ENCODE measurements at regions of chr7 and their contacts with region 1.

Region 1: GRCh38 chr7:65373608-65374351 is at the start of gene ZNF92:
- DNase-seq: peak; percentile 90 to 97 (median 95)
- ATAC-seq: peak; percentile 98
- H3K4me3 ChIP-seq: peak within 1 kb of the TSS; percentile 91 to 98
- H3K4me3 Mint-ChIP-seq: peak within 1 kb of the TSS; percentile 94
- H3K27ac ChIP-seq: peak within 1 kb of the TSS; percentile 79 to 90
- H3K27ac Mint-ChIP-seq: peak within 1 kb of the TSS; percentile 93
- H3K4me1 ChIP-seq: peaks cover 24% of the 10 kb centered on the region
- H3K4me1 Mint-ChIP-seq: peaks cover 52% of the 10 kb centered on the region
- H3K27me3 ChIP-seq: no peaks in the 10 kb centered on the region
- H3K27me3 Mint-ChIP-seq: no peaks in the 10 kb centered on the region
- CTCF ChIP-seq: no peak
- total RNA-seq, gene ZNF92: 31.6 to 37.3 TPM

Region 2: GRCh38 chr7:64313740-64314491 is 1059.9 kb before region 1 on chr7 and contains the start of gene ZNF736:
- CTCF ChIA-PET with region 1: no interaction called
- POLR2A ChIA-PET with region 1: interaction called, 4 read pairs
- intact Hi-C with region 1: loop called in 1 of 2 experiments (anchors 5 kb)
- DNase-seq: peak; percentile 71 to 94 (median 86)
- ATAC-seq: peak; percentile 100
- H3K4me3 ChIP-seq: peak within 1 kb of the TSS; percentile 66 to 98
- H3K4me3 Mint-ChIP-seq: peak within 1 kb of the TSS; percentile 99
- H3K27ac ChIP-seq: peak within 1 kb of the TSS; percentile 76 to 88
- H3K27ac Mint-ChIP-seq: peak within 1 kb of the TSS; percentile 98
- H3K4me1 ChIP-seq: peaks cover 25% of the 10 kb centered on the region
- H3K4me1 Mint-ChIP-seq: peaks cover 32% of the 10 kb centered on the region
- H3K27me3 ChIP-seq: no peaks in the 10 kb centered on the region
- H3K27me3 Mint-ChIP-seq: no peaks in the 10 kb centered on the region
- CTCF ChIP-seq: no peak
- total RNA-seq, gene ZNF736: 23.4 to 26.6 TPM

Region 3: DNA sequence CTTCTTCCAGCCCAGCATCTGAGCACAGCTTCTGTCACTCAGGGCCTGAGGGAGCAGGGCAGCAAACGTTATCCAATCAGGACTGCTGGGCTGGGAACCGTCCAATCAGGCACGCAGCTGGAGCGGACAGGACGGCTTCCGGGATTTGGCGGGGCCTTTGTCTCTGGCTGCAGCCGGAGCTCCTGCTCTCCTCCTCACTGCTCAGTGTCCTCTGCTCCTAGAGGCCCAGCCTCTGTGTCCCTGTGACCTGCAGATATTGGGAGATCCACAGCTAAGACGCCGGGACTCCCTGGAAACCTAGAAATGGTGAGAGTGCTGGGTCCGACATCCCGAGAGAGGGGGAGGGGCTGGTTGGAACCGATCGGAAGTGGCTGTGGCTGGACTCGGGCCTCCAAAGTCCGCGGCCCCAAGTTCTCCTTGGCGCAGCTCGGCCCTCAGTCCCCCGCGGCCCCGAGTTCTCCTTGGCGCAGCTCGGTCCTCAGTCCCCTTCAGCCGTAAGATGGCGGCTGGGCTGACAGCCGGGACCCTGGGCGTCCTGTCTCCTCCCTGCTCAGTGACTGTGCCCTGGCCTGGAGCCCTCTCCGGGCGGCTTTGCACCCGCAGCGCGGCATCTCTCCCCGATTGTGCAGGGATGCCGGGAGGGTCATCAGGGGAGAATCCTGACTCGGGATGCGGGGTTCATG is 707.7 kb before region 1 on chr7 and contains the start of gene ZNF107:
- CTCF ChIA-PET with region 1: no interaction called
- POLR2A ChIA-PET with region 1: no interaction called
- intact Hi-C with region 1: loop called (anchors 5 to 10 kb)
- DNase-seq: peak; percentile 73 to 94 (median 86)
- ATAC-seq: peak; percentile 95
- H3K4me3 ChIP-seq: peak within 1 kb of the TSS; percentile 93 to 95
- H3K4me3 Mint-ChIP-seq: peak within 1 kb of the TSS; percentile 96
- H3K27ac ChIP-seq: peak within 1 kb of the TSS; percentile 92 to 93
- H3K27ac Mint-ChIP-seq: peak within 1 kb of the TSS; percentile 96
- H3K4me1 ChIP-seq: peaks cover 14% of the 10 kb centered on the region
- H3K4me1 Mint-ChIP-seq: peaks cover 64% of the 10 kb centered on the region
- H3K27me3 ChIP-seq: no peaks in the 10 kb centered on the region
- H3K27me3 Mint-ChIP-seq: no peaks in the 10 kb centered on the region
- CTCF ChIP-seq: no peak
- total RNA-seq, gene ZNF107: 14.0 to 14.7 TPM

Region 4: GRCh38 chr7:64902806-64903721 is 470.7 kb before region 1 on chr7 and contains the start of gene ZNF273:
- CTCF ChIA-PET with region 1: no interaction called
- POLR2A ChIA-PET with region 1: interaction called, 7 read pairs
- intact Hi-C with region 1: loop called (anchors 2 to 5 kb)
- DNase-seq: peak; percentile 82 to 94 (median 89)
- ATAC-seq: peak; percentile 100
- H3K4me3 ChIP-seq: peak within 1 kb of the TSS; percentile 71 to 98
- H3K4me3 Mint-ChIP-seq: peak within 1 kb of the TSS; percentile 97
- H3K27ac ChIP-seq: peak within 1 kb of the TSS; percentile 53 to 86
- H3K27ac Mint-ChIP-seq: peak within 1 kb of the TSS; percentile 96
- H3K4me1 ChIP-seq: peaks cover 30% of the 10 kb centered on the region
- H3K4me1 Mint-ChIP-seq: peaks cover 48% of the 10 kb centered on the region
- H3K27me3 ChIP-seq: no peaks in the 10 kb centered on the region
- H3K27me3 Mint-ChIP-seq: no peaks in the 10 kb centered on the region
- CTCF ChIP-seq: no peak
- total RNA-seq, gene ZNF273: 8.7 to 9.9 TPM

Region 5: DNA sequence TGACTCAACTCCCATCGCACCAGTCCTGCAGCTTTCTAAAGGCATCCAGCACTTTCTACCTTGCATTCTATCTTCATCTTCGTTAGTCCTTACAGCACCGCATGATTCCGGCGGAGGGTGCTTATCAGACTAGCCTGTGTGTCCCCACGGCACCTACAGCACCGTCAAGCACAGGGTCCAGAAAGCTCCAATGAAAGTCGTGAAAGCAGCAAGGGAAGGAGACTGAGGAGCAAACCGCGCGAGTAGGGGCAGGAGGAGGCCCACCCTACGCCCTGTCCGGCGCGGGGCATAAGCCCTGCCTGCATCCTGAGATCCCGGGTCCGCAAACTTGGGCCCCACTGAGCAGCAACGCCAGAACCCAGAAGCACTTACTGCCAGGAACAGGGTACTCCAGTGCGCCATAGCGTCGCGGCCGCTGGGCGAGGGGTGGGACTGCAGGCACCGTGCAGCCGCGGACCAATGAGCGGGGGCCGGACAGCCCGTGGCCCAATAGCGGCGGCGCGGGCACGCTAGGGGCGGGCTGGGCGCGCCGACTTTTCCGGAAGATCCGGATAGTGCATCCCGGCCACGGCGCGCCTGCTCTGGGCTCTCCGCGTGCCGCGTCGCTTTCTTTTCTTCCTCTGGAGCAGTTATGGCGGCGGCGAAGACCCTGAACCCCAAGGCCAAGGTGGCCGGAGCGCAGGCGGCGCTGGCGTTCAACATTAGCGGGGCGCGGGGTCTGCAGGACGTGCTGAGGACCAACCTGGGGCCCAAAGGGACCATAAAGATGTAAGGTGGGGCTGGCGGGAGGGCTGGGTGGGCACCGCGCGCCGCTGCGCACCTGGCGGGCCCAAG is 376.9 kb after region 1 on chr7:
- CTCF ChIA-PET with region 1: no interaction called
- POLR2A ChIA-PET with region 1: no interaction called
- intact Hi-C with region 1: loop called (anchors 5 to 10 kb)
- DNase-seq: peak; percentile 65 to 91 (median 87)
- ATAC-seq: peak; percentile 96
- H3K4me3 ChIP-seq: peak overlapping the region; percentile 77 to 88
- H3K4me3 Mint-ChIP-seq: peak overlapping the region; percentile 88
- H3K27ac ChIP-seq: peak overlapping the region; percentile 74 to 81
- H3K27ac Mint-ChIP-seq: peak overlapping the region; percentile 88
- H3K4me1 ChIP-seq: peaks cover 16% of the 10 kb centered on the region
- H3K4me1 Mint-ChIP-seq: peaks cover 35% of the 10 kb centered on the region
- H3K27me3 ChIP-seq: no peaks in the 10 kb centered on the region
- H3K27me3 Mint-ChIP-seq: no peaks in the 10 kb centered on the region
- CTCF ChIP-seq: no peak

Region 6: DNA sequence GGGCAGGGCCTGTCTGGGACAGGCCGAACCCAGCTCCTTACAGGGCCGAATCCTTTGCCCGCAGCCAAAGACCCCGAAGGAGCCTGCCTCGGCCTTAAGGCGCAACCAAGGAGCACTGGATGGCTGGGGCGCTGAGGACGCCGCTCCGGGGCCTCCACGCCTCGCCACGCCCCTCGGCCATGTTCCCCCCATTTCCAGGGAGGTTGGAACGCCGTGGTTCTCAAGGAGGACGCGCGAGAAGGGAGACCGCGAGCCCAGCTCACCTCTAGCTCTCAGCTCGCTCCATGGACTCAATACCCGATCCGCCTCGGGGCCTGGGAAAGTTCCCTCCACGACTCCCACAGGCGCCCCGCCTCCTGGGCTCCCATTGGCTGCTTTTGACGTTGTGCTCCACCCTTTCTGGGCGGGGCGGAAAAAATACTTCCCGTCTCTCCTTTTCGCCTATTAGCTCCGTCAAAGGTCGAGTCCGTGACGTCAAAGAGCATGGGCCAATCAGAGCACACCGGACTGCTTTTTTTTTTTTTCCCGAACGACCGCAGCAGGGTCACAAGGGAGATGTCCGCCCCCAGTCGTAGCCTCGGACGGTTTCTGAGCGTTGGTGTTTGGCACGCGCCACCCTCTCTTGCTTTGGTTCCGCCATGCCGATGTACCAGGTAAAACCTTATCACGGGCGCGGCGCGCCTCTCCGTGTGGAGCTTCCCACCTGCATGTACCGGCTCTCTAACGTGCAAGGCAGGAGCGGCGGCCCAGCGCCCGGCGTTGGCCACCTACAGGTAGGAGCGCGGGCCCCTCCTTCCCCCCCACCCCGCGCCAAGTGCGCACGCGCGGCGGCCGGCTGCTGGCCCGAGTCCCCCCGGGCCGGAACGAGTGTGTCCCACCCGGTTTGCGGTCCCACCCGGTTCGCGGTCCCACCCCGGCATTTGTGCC is 1928.6 kb after region 1 on chr7:
- CTCF ChIA-PET with region 1: no interaction called
- POLR2A ChIA-PET with region 1: no interaction called
- intact Hi-C with region 1: loop called in 1 of 2 experiments (anchors 10 kb)
- DNase-seq: peak; percentile 93 to 99 (median 97)
- ATAC-seq: peak; percentile 77
- H3K4me3 ChIP-seq: peak overlapping the region; percentile 81 to 99
- H3K4me3 Mint-ChIP-seq: peak overlapping the region; percentile 97
- H3K27ac ChIP-seq: peak overlapping the region; percentile 92 to 93
- H3K27ac Mint-ChIP-seq: peak overlapping the region; percentile 99
- H3K4me1 ChIP-seq: no peaks in the 10 kb centered on the region
- H3K4me1 Mint-ChIP-seq: peaks cover 27% of the 10 kb centered on the region
- H3K27me3 ChIP-seq: no peaks in the 10 kb centered on the region
- H3K27me3 Mint-ChIP-seq: no peaks in the 10 kb centered on the region
- CTCF ChIP-seq: no peak